Gastrocnemius medialis (tissue), 4 donors: ENCODE measurements at regions of chr6 and their contacts with region 1.

Region 1: DNA sequence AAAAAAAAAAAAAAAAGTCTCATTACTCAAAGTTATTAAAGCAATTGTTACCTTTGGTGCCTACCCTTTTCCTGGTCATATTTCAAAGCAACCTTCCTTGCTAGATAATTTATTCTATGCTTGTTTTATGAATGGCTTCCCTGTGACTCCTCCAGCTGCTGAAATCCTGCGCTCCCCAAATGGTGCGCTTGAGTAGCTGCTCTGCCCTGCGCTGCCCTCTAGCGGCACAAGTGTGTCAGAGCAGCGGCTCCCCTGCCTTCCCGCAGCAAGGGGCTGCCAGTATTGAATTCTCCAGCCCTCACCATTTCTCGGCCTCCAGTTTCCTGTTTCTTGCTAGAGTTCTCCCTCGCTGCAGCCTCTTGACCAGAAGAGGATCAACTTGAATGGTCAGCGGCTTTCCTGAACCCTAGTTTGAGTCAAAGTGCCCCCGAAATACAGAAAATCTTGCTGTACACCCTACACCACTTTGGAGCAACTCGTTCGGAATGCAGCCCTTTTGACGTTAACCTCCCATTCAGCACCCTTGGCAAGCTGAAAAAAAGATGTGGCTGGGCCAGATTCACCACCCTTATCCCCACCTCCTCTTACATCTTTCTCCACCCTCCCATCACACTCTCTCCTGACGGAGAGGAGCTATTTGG is 60.4 kb upstream of the KLHL31 start:
- DNase-seq: peak; percentile 54 to 64
- ATAC-seq: peak; percentile 86 to 90
- H3K4me3 ChIP-seq: no peak overlapping the region
- H3K27ac ChIP-seq: no peak overlapping the region
- H3K4me1 ChIP-seq: no peaks in the 10 kb centered on the region
- H3K27me3 ChIP-seq: no peaks in the 10 kb centered on the region
- CTCF ChIP-seq: peak; percentile 83 to 99 (median 89)
- POLR2A ChIP-seq: no peak

Region 2: DNA sequence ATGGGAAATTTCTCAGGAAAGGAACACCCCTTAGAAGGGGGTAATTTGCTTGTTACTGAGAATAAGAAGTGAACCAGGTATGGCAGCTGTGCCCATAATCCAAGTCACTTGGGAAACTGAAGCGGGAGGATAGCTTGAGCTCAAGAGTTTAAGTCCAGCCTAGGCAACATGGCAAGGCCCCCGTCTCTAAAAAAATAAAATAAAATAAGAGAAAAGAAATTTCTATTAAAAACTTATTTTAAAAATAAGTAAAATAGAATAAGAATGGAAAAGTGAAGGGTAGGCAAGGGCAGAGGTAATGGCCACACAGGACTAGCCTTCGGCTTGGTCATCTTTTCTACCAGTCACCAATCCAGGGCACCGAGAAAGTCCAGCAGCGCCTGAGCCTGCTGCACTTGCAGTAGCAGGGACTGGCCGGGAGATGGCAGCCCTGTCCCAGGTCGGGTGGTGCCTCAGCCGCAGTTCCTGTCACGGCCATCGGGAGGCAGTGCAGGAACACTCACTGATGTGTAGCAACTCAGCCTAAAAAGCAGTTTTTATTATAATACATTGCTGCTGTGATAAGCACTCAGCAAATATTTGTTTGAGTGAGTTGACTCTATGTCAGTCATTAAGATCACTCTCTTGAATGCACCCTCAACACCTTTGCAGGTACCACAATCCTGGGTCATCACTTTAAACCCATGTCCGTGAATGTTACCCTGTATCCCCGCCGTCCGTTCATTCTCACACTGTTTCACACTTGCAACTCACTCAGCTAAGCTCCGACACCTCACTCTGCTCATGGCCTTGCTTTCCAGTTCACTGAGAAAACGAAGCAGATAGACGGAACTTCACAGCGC is 554.1 kb before region 1 on chr6:
- in situ Hi-C with region 1: loop called (anchors 25 kb)
- intact Hi-C with region 1: loop called (anchors 5 kb)
- DNase-seq: peak; percentile 66 to 77
- ATAC-seq: peak; percentile 73 to 75
- H3K4me3 ChIP-seq: no peak overlapping the region
- H3K27ac ChIP-seq: no peak overlapping the region
- H3K4me1 ChIP-seq: no peaks in the 10 kb centered on the region
- H3K27me3 ChIP-seq: no peaks in the 10 kb centered on the region
- CTCF ChIP-seq: peak; percentile 97 to 100 (median 100)
- POLR2A ChIP-seq: no peak

Region 3: GRCh38 chr6:53492860-53493634 is 232.9 kb before region 1 on chr6:
- in situ Hi-C with region 1: loop called (anchors 5 to 10 kb)
- intact Hi-C with region 1: loop called (anchors 1 kb)
- DNase-seq: peak in 1 of 2 donors; percentile 24
- ATAC-seq: peak; percentile 72 to 91
- H3K4me3 ChIP-seq: peak overlapping the region; percentile 29 to 54 (median 36)
- H3K27ac ChIP-seq: peak overlapping the region; percentile 36 to 76 (median 39)
- H3K4me1 ChIP-seq: peaks cover 5 to 9% of the 10 kb centered on the region in 2 donors
- H3K27me3 ChIP-seq: no peaks in the 10 kb centered on the region
- CTCF ChIP-seq: peak; percentile 26 to 78 (median 71)
- POLR2A ChIP-seq: no peak

Region 4: DNA sequence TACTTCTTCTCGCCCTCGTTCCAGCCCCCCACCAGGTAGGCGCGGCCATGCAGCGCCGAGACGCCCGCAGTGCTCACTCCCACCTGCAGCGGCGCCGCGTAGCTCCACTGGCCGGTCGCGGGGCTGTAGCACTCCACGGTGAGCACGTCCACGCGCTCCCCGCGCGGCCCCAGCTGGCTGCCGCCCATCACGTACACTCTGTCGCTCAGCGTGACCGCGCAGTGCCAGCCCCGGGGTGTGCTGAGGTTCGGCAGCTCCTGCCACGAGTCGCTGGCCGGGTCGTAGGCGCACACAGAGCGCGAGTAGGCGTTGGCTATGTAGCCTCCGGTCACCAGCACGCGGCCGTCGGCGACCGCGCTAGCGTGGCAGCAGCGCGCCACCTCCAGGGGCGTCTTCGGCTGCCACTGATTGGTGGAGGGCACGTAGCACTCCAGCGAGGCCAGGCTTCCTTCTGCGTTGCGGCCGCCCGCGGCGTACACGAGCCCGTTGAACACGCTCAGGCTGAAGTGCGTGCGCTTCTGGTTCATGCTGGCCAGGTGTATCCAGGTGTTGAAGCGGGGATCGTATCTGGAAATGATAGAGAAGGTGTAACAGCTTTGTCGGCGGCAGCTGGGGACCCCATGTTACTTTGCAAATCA is 74.0 kb before region 1 on chr6:
- in situ Hi-C with region 1: no loop called
- intact Hi-C with region 1: loop called (anchors 5 kb)
- DNase-seq: peak; percentile 63 to 85
- ATAC-seq: peak; percentile 84 to 86
- H3K4me3 ChIP-seq: peak overlapping the region; percentile 59 to 65 (median 63)
- H3K27ac ChIP-seq: peak overlapping the region; percentile 79 to 92 (median 89)
- H3K4me1 ChIP-seq: peaks cover 48 to 72% of the 10 kb centered on the region in 2 donors
- H3K27me3 ChIP-seq: no peaks in the 10 kb centered on the region
- CTCF ChIP-seq: peak in 4 of 5 experiments; percentile 33 to 46 (median 36)
- POLR2A ChIP-seq: peak; percentile 17 to 57